ENCODE measurements at regions of chr12 and their contacts with region 1.

Region 1: DNA sequence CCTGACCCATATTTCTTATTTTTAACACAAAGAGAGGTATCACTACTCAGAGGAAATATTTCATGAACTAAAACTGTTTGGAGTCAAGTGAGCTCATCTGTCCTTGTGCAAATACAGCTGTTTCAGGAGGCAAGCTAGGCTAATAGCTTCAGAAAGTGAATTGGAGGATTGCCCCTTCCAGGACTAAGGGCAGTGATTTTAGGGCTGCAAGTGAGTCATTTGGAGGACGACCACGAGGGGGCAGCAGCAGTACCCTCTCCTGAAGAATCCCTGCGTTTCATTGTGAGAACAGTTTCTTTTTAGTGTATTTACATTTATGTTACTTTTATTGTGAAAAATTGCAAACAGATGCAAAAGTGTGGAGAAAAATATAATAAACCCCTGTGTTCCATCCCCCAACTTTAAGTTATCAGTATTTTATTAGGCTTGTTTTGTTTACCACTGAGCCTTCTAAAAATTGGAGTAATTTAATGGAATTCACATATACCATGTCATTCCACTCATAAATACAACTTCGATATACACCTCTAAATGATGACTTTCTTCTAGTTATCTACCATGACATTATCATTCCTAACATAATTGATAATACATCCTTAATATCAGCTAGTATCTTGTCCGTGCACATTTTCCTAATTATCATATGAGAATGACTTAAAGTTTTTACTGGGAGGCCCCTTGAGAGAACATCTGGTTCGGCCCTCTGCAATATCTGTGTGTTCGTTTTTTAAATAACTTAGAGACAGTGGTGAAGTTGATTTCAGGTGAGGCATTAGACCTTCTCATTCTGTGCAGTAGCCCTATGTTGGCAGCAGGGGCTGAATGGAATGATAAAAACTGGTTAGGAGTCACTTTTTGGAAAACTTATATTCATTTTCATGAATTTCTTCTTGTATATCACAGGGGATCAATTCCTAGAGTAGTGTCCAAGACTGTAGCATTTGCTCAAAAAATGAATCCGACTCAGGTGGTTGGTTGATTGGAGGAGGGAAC is 13.7 kb downstream of the FOXJ2 start:
- DNase-seq: peak; percentile 84 to 86
- ATAC-seq: peak; percentile 90 to 96
- H3K4me3 ChIP-seq: no peak overlapping the region
- H3K27ac ChIP-seq: no peak overlapping the region
- H3K4me1 ChIP-seq: no peaks in the 10 kb centered on the region
- CTCF ChIP-seq: peak; percentile 83
- EP300 ChIP-seq: no peak
- POLR2A ChIP-seq: no peak
- RAD21 ChIP-seq: peak; percentile 60 to 62; a peak in 4 of 5 replicates

Region 2: DNA sequence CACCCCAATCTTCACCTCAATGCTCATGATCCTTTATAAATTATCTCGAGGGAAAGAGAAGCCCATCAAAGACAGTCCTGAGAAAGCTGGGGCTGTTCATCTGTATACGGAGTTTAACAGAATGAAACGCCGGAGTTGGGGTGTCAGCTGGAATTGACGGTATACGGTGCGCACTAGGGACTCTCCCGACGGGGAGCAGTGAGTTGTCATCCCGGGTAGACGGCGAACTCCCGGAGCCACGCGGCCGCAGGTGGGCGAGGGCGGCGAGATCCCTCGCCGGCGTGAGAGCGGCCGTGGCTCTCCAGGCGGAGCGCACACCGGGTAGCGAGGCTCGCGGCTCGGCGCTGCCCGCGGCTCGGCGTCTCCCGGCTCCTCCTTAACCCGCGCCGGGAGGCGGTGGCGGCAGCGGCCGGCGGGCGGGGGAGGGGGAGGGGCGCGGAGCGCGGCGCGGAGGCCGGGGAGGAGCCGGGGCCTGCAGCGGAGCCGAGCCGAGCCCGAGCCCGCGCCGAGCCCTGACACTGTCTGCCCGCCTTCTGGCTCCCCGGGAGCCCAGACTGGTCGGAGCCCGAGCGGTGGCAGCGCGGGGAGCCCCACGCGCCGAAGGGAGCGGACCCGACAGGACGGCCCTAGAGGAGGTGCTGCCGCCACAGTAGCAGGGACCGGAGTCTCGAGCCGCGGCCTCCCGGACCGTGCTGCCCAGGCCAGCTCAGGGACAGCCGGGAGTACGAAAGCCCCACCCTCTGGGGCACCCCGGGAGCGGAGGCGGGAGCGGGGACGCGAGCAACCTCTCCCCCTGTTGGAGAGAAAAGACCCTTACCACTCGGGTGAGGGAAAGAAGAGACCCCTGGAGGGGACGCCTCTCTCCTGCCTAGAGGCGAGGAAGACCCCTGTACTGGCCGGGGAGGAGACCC is 13.8 kb before region 1 on chr12 and contains the start of gene FOXJ2:
- CTCF ChIA-PET with region 1: interaction called, 30 read pairs
- POLR2A ChIA-PET with region 1: interaction called, 7 read pairs
- DNase-seq: peak; percentile 57 to 68
- ATAC-seq: peak; percentile 90
- H3K4me3 ChIP-seq: peak within 1 kb of the TSS; percentile 70
- H3K27ac ChIP-seq: peak within 1 kb of the TSS; percentile 81 to 94
- H3K4me1 ChIP-seq: peaks cover 25% of the 10 kb centered on the region
- CTCF ChIP-seq: no peak
- EP300 ChIP-seq: no peak
- POLR2A ChIP-seq: peak; percentile 53
- RAD21 ChIP-seq: no peak
- polyA plus RNA-seq, gene FOXJ2: 7.0 and 9.5 TPM in 2 replicates

Region 3: GRCh38 chr12:8057839-8058238 is 11.6 kb after region 1 on chr12:
- CTCF ChIA-PET with region 1: interaction called, 37 read pairs
- POLR2A ChIA-PET with region 1: no interaction called
- DNase-seq: no peak
- ATAC-seq: peak in 1 of 2 experiments; percentile 71; a peak in 2 of 6 replicates
- H3K4me3 ChIP-seq: no peak overlapping the region
- H3K27ac ChIP-seq: no peak overlapping the region
- H3K4me1 ChIP-seq: no peaks in the 10 kb centered on the region
- CTCF ChIP-seq: no peak
- EP300 ChIP-seq: no peak
- POLR2A ChIP-seq: no peak
- RAD21 ChIP-seq: no peak

Region 4: GRCh38 chr12:8065991-8066594 is 19.8 kb after region 1 on chr12 and contains the start of gene C3AR1:
- CTCF ChIA-PET with region 1: interaction called, 11 read pairs
- POLR2A ChIA-PET with region 1: no interaction called
- DNase-seq: no peak
- ATAC-seq: no peak
- H3K4me3 ChIP-seq: no peak within 1 kb of the TSS
- H3K27ac ChIP-seq: no peak within 1 kb of the TSS
- H3K4me1 ChIP-seq: no peaks in the 10 kb centered on the region
- CTCF ChIP-seq: no peak
- EP300 ChIP-seq: no peak
- POLR2A ChIP-seq: no peak
- RAD21 ChIP-seq: no peak
- polyA plus RNA-seq, gene C3AR1: not detected in 2 replicates

Region 5: DNA sequence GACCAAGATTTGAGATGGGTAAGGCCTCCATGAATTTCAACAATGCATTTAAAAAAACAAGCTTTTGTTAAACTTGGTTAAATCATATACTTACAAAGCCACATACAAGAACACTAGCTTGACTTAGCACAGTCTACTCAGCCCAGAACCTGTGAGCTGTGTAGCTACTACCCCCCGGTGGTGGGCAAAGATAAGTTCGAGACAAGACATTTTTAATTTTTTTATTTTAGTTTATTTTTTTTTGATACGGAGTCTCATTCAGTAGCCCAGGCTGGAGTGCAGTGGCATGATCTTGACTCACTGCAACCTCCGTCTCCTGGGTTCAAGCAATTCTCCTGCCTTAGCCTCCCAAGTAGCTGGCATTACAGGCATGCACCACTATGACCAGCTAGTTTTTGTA is 32.1 kb after region 1 on chr12:
- CTCF ChIA-PET with region 1: interaction called, 70 read pairs
- POLR2A ChIA-PET with region 1: no interaction called
- DNase-seq: peak in 1 of 2 experiments; percentile 68
- ATAC-seq: no peak
- H3K4me3 ChIP-seq: no peak overlapping the region
- H3K27ac ChIP-seq: no peak overlapping the region
- H3K4me1 ChIP-seq: peaks cover 27% of the 10 kb centered on the region
- CTCF ChIP-seq: peak; percentile 37; the same call in 2 of the 3 replicates
- EP300 ChIP-seq: no peak
- POLR2A ChIP-seq: no peak
- RAD21 ChIP-seq: peak; percentile 51 to 53; a peak in 4 of 5 replicates